ENCODE measurements at regions of chr10 and their contacts with region 1.

Region 1: DNA sequence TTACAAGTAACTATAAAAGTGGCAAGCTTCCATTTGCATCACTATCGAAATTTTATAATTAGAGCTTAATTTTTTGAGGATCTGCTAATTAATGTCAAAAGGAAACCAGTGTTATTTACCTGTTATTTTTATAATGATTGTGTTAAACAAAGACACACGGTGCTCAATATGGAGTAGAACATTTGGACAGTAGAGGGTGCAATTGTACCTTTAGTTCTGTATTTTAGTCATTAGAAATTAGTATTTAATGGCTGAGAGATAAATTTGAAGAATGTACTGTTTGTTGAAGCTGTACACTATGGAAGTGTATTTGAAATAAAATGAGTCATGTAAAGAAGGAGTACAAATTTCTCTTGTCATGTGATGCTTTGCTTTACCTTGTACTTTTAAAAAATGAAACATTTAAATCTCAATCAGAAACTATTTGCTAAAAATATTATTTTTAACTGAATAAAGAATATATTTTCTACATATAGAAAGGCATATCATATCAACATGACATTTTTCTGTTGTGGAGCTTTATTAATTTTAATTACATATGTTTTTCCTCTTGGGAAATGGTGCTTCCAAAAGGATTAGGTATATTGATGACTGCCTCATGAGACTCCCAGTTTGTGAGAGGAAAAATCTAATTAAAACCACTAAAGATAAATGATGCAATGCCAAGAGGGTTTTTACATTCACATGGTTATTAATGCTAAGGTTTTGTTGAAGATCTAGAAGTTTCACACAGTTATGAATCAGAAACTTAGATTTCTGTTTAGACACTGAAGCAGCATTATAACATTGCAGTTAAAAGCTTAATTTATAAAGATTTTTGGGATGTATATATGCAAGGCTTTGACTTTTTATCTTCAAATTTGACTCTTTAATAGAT is 10.4 kb upstream of the PRKG1 start:
- DNase-seq: no peak
- H3K4me3 ChIP-seq: no peak overlapping the region
- H3K27ac ChIP-seq: no peak overlapping the region
- H3K4me1 ChIP-seq: peaks cover 0 to 4% of the 10 kb centered on the region in 2 donors
- H3K27me3 ChIP-seq: no peaks in the 10 kb centered on the region
- CTCF ChIP-seq: peak; percentile 29 to 80 (median 60)
- POLR2A ChIP-seq: no peak

Region 2: DNA sequence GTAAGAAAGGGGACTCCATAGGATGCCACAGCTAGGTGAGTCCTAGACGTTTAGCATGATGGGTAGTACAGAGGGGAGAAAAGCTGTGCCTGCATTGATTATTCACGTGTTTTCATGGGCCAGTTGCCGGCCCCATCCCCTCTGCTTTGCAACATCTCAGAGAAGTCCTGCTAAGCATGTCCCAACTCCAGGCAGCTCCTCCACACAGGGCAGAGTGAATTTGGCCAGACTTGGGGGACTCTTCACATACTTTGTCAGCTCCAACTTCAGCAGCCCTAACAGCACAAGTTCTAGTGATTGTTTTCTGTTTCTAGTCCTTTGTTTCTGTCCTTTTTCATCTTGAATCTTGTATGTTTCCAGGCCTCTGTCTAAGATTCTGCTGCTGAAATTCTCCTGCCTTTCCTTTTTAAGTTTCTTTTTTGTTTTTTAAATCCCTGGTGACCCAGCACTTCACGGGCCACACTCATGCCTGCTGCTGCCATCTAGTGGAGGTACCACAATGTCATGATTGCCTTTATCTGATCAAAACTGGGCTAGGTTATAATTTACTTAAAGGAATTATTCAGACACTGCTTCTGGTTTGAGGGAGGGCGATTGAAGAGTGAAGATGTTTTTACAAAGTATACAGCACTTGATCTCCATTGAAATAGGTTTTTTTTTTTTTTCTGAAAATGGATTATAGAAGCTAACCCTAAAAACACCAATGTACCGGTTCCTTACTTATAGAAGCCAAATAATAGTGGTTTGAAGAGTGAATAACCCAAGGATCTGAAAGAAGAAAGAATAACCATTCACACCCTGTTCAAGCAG is 358.6 kb after region 1 on chr10:
- intact Hi-C with region 1: loop called (anchors 5 kb)
- DNase-seq: peak; percentile 72 to 79
- H3K4me3 ChIP-seq: no peak overlapping the region
- H3K27ac ChIP-seq: peak overlapping the region in 1 of 3 donors; percentile 34
- H3K4me1 ChIP-seq: peaks cover 6 to 7% of the 10 kb centered on the region in 2 donors
- H3K27me3 ChIP-seq: no peaks in the 10 kb centered on the region
- CTCF ChIP-seq: peak; percentile 70 to 93 (median 78)
- POLR2A ChIP-seq: no peak

Measured in thyroid gland (tissue), 4 donors.